ENCODE measurements at regions of chr5 and their contacts with region 1.

Region 1: GRCh38 chr5:56328753-56329560 is 95.8 kb upstream of the ANKRD55 start:
- DNase-seq: peak; percentile 68
- ATAC-seq: peak; percentile 69
- H3K4me3 Mint-ChIP-seq: peak overlapping the region; percentile 34
- H3K27ac Mint-ChIP-seq: peak overlapping the region; percentile 93
- H3K4me1 Mint-ChIP-seq: peaks cover 66% of the 10 kb centered on the region
- H3K27me3 Mint-ChIP-seq: no peaks in the 10 kb centered on the region

Region 2: DNA sequence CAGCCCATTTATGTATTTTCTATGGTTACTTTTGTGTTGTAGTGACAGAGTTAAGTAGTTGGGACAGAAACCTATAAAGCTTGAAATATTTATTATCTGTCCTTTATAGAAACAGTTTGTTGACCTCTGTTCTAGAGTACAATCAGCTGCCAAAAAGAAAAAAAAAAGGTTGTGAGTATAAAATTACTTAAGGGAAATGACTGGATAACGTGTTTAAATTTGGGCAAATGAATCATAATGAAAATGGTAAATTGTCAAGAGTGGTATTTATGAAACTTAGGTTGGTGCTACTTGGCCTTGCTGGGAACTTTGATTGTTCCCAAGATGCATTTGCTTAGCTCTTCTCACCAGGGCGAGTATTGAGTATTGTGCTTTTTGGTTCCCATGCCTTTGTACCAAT is 264.0 kb before region 1 on chr5:
- CTCF ChIA-PET with region 1: no interaction called
- POLR2A ChIA-PET with region 1: no interaction called
- intact Hi-C with region 1: loop called in 1 of 2 experiments (anchors 5 kb)
- DNase-seq: no peak
- ATAC-seq: peak; percentile 61
- H3K4me3 Mint-ChIP-seq: no peak overlapping the region
- H3K27ac Mint-ChIP-seq: no peak overlapping the region
- H3K4me1 Mint-ChIP-seq: peaks cover 68% of the 10 kb centered on the region
- H3K27me3 Mint-ChIP-seq: peaks cover 1% of the 10 kb centered on the region

Region 3: GRCh38 chr5:56270568-56271392 is 58.2 kb before region 1 on chr5:
- CTCF ChIA-PET with region 1: interaction called, 8 read pairs
- POLR2A ChIA-PET with region 1: no interaction called
- intact Hi-C with region 1: loop called (anchors 2 to 5 kb)
- DNase-seq: peak; percentile 87
- ATAC-seq: peak; percentile 97
- H3K4me3 Mint-ChIP-seq: no peak overlapping the region
- H3K27ac Mint-ChIP-seq: peak overlapping the region; percentile 81
- H3K4me1 Mint-ChIP-seq: peaks cover 19% of the 10 kb centered on the region
- H3K27me3 Mint-ChIP-seq: no peaks in the 10 kb centered on the region

Region 4: GRCh38 chr5:56610093-56610698 is 281.2 kb after region 1 on chr5:
- CTCF ChIA-PET with region 1: no interaction called
- POLR2A ChIA-PET with region 1: no interaction called
- intact Hi-C with region 1: loop called in 1 of 2 experiments (anchors 5 kb)
- DNase-seq: peak; percentile 71
- ATAC-seq: peak; percentile 98
- H3K4me3 Mint-ChIP-seq: peak overlapping the region; percentile 12
- H3K27ac Mint-ChIP-seq: peak overlapping the region; percentile 75
- H3K4me1 Mint-ChIP-seq: peaks cover 67% of the 10 kb centered on the region
- H3K27me3 Mint-ChIP-seq: no peaks in the 10 kb centered on the region

Region 5: GRCh38 chr5:56861893-56862485 is 533.0 kb after region 1 on chr5:
- CTCF ChIA-PET with region 1: no interaction called
- POLR2A ChIA-PET with region 1: interaction called, 10 read pairs
- intact Hi-C with region 1: no loop called
- DNase-seq: no peak
- ATAC-seq: no peak
- H3K4me3 Mint-ChIP-seq: no peak overlapping the region
- H3K27ac Mint-ChIP-seq: no peak overlapping the region
- H3K4me1 Mint-ChIP-seq: peaks cover 19% of the 10 kb centered on the region
- H3K27me3 Mint-ChIP-seq: no peaks in the 10 kb centered on the region

Region 6: GRCh38 chr5:57383093-57383861 is 1054.3 kb after region 1 on chr5:
- CTCF ChIA-PET with region 1: no interaction called
- POLR2A ChIA-PET with region 1: no interaction called
- intact Hi-C with region 1: loop called in 1 of 2 experiments (anchors 5 kb)
- DNase-seq: peak; percentile 72
- ATAC-seq: peak; percentile 97
- H3K4me3 Mint-ChIP-seq: no peak overlapping the region
- H3K27ac Mint-ChIP-seq: peak overlapping the region; percentile 4
- H3K4me1 Mint-ChIP-seq: peaks cover 17% of the 10 kb centered on the region
- H3K27me3 Mint-ChIP-seq: peaks cover 1% of the 10 kb centered on the region